ENCODE measurements at regions of chr1 and their contacts with region 1.

Region 1: GRCh38 chr1:90841473-90841872 is 124.4 kb upstream of the BARHL2 start:
- DNase-seq: peak in 1 of 10 donors; percentile 46

Region 2: GRCh38 chr1:90721210-90722194 is 120.0 kb before region 1 on chr1:
- intact Hi-C with region 1: loop called (anchors 10 kb)
- DNase-seq: peak in 3 of 10 donors; percentile 15 to 88 (median 66)

Measured in posterior cingulate gyrus (tissue), 11 donors.